ENCODE measurements at regions of chr9 and their contacts with region 1.

Region 1: DNA sequence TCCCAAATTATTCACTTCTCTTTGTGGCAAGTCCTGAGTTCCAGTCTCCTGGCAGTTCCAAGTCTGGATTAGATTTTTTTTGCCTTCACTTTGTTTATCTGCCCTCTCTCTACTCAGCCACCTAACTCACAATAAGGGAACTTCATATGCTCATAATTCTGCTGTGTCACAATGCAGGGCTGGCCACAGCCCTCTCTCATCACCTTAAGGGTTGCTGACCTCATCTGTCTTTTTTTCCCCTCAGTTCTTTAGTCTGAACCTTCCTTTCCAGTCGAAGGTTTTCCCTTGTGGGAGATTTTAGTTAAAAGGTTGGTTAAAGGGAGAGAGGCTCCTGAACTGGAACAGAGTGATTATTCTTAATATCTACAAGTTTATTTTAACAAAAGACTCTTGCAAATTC is 4.1 kb downstream of the BAG1 start:
- DNase-seq: no peak
- H3K4me3 Mint-ChIP-seq: no peak overlapping the region
- H3K27ac Mint-ChIP-seq: peak overlapping the region; percentile 36
- H3K4me1 Mint-ChIP-seq: peaks cover 34% of the 10 kb centered on the region
- H3K27me3 Mint-ChIP-seq: no peaks in the 10 kb centered on the region

Region 2: DNA sequence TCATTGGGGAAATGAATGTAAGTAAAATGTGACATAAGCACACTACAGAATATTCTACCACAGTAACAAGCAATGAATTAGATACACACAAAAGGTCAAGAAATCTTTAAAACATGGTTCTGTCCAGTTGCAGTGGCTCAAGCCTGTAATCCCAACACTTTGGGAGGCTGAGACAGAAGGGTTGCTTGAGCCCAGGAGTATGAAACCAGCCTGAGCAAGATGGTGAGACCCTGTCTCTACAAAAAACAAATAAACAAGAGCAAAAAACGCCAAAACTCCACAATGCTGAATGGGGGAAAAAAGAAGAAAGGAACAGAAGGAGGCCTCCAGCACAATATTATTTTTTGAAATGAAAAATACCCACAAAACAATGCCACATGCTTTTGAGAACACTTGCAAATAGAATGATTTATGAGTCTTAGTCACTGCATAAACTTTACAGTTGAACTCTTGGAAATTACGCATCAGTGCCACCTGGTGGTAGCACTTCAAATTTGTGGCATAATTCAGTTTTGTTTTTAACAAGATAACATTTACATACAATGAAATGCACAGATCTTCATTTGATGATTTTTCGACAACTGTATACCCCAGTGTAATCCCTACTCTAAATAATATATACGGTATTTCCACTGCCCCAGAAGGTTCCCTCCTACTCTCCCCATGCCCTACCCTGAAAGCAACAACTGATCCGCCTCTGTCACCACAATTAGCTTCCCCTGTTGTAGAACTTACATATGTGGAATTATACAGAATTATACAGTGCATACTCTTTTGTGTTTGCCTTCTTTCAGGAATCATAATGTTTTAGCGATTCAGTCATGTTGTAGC is 34.8 kb before region 1 on chr9:
- CTCF ChIA-PET with region 1: interaction called, 10 read pairs
- POLR2A ChIA-PET with region 1: no interaction called
- DNase-seq: peak; percentile 84
- H3K4me3 Mint-ChIP-seq: no peak overlapping the region
- H3K27ac Mint-ChIP-seq: peak overlapping the region; percentile 82
- H3K4me1 Mint-ChIP-seq: peaks cover 32% of the 10 kb centered on the region
- H3K27me3 Mint-ChIP-seq: no peaks in the 10 kb centered on the region

Measured in activated CD4-positive, alpha-beta T cell treated with anti-CD3 and anti-CD28 coated beads, Interleukin-2, amount 10 ng/mL, durations not matched to agents 7 days and 5 days (primary cell).